Mammary epithelial cell (primary cell): ENCODE measurements at regions of chr7 and their contacts with region 1.

Region 1: GRCh38 chr7:24971333-24972165 is 8.4 kb downstream of the OSBPL3 start:
- DNase-seq: peak; percentile 94
- H3K4me3 ChIP-seq: peak overlapping the region in 2 of 3 experiments; percentile 18 to 40
- H3K27ac ChIP-seq: peak overlapping the region; percentile 100
- H3K4me1 ChIP-seq: peaks cover 72% of the 10 kb centered on the region
- H3K27me3 ChIP-seq: no peaks in the 10 kb centered on the region
- CTCF ChIP-seq: no peak

Region 2: GRCh38 chr7:24936121-24936824 is 35.3 kb before region 1 on chr7:
- CTCF ChIA-PET with region 1: no interaction called
- dilution Hi-C with region 1: no loop called
- in situ Hi-C with region 1: no loop called
- intact Hi-C with region 1: loop called (anchors 5 kb)
- DNase-seq: no peak
- H3K4me3 ChIP-seq: no peak overlapping the region
- H3K27ac ChIP-seq: peak overlapping the region; percentile 9
- H3K4me1 ChIP-seq: peaks cover 22% of the 10 kb centered on the region
- H3K27me3 ChIP-seq: no peaks in the 10 kb centered on the region
- CTCF ChIP-seq: no peak